ENCODE measurements at regions of chr17 and their contacts with region 1.

Region 1: DNA sequence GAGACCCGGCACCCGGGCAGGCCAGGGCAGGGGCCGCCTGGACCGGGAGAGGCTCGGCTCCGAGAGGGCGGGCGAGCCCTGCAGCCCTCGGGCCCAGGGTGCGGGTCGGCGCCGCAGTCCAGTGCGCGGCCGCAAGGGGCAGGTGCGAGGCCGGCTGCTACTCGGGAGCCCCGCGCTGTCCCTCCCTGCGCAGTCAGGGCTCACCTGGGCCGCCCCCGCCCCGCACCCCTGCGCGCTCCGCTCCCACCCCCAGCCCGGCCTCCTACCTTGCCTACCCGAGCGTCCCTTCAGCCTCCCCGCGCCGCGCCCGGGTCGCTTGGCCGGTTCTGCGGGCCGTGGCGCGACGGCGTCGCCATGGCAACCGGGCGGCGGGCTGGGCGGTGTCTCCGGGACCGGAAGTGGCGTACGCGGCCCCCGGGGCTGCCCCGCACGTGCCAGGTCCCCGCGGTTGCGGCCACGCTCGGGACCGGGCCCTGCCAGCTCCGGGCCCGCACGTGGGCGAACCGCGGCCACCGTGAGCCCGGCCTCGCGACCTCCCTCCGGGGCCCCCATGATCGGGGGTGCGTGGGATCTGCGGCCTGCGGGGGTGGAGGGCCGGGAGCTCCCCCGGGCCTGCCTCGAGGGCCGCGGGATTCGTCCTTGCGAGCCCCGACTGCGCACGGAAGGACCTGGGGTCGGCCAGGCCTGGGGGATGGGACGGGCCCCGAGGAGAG is at the start of gene CYB561:
- DNase-seq: peak; percentile 92
- H3K4me3 Mint-ChIP-seq: peak within 1 kb of the TSS; percentile 70
- H3K27ac Mint-ChIP-seq: peak within 1 kb of the TSS; percentile 59
- H3K4me1 Mint-ChIP-seq: peaks cover 26% of the 10 kb centered on the region
- H3K27me3 Mint-ChIP-seq: peaks cover 16% of the 10 kb centered on the region
- total RNA-seq, gene CYB561: 1.7 and 2.0 TPM in 2 replicates

Region 2: GRCh38 chr17:63369233-63369632 is 76.9 kb before region 1 on chr17:
- intact Hi-C with region 1: no loop called
- DNase-seq: no peak
- H3K4me3 Mint-ChIP-seq: no peak overlapping the region
- H3K27ac Mint-ChIP-seq: no peak overlapping the region
- H3K4me1 Mint-ChIP-seq: no peaks in the 10 kb centered on the region
- H3K27me3 Mint-ChIP-seq: peaks cover 6% of the 10 kb centered on the region

Region 3: GRCh38 chr17:63621766-63622519 is 175.8 kb after region 1 on chr17 and contains the start of gene MAP3K3:
- intact Hi-C with region 1: loop called (anchors 5 kb)
- DNase-seq: peak; percentile 99
- H3K4me3 Mint-ChIP-seq: peak within 1 kb of the TSS; percentile 99
- H3K27ac Mint-ChIP-seq: peak within 1 kb of the TSS; percentile 96
- H3K4me1 Mint-ChIP-seq: peaks cover 30% of the 10 kb centered on the region
- H3K27me3 Mint-ChIP-seq: peaks cover 11% of the 10 kb centered on the region
- total RNA-seq, gene MAP3K3: 26.2 and 26.7 TPM in 2 replicates

Measured in activated CD4-positive, alpha-beta T cell treated with anti-CD3 and anti-CD28 coated beads, Interleukin-2, amount 10 ng/mL, durations not matched to agents 24 days and 14 days (primary cell).